Mammary epithelial cell (primary cell): ENCODE measurements at regions of chr4 and their contacts with region 1.

Region 1: DNA sequence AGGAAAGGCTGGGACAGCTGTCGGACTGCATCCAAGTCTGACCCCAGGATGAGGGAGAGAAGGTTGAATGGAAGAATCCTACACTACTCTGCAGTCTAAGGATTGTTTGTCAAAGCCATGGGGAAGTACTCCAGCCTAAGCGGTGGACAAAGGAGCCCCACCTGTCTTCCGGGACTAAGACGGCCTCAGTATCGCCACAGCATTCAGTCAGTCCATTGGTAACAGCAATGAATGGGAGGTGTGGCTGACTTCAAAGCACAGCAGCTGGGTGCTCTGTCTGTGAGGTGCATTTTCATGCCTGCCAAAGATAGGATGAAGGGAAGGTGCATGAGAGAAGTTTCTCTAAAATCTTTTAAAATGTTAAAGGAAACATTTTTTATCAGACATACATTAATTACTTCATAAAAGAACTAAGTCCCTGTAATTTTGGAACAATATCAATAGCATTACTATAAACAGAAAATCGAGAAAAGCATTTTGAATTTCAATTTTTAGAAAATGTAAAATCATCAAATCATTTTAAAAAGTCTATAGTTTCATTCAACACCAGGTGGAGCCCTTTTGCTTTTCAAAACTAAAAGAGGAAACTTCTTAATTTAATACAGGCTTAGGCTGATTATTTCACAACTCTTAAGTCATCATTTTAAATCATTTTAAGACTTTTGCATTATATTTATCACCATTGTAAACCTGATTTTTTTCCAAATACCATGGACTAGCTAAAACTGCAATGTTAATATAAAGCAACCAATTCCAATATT is 27.6 kb upstream of the INTU start:
- DNase-seq: peak; percentile 12
- H3K4me3 ChIP-seq: no peak overlapping the region
- H3K27ac ChIP-seq: no peak overlapping the region
- H3K4me1 ChIP-seq: no peaks in the 10 kb centered on the region
- H3K27me3 ChIP-seq: no peaks in the 10 kb centered on the region
- CTCF ChIP-seq: peak; percentile 28 to 46

Region 2: GRCh38 chr4:127698789-127699200 is 93.7 kb after region 1 on chr4:
- CTCF ChIA-PET with region 1: no interaction called
- dilution Hi-C with region 1: no loop called
- in situ Hi-C with region 1: no loop called
- intact Hi-C with region 1: no loop called
- DNase-seq: peak; percentile 87
- H3K4me3 ChIP-seq: no peak overlapping the region
- H3K27ac ChIP-seq: peak overlapping the region; percentile 16
- H3K4me1 ChIP-seq: no peaks in the 10 kb centered on the region
- H3K27me3 ChIP-seq: no peaks in the 10 kb centered on the region
- CTCF ChIP-seq: no peak

Region 3: GRCh38 chr4:127732613-127733328 is 127.6 kb after region 1 on chr4:
- CTCF ChIA-PET with region 1: no interaction called
- dilution Hi-C with region 1: no loop called
- in situ Hi-C with region 1: loop called (anchors 5 kb)
- intact Hi-C with region 1: loop called (anchors 1 kb)
- DNase-seq: peak; percentile 27
- H3K4me3 ChIP-seq: no peak overlapping the region
- H3K27ac ChIP-seq: no peak overlapping the region
- H3K4me1 ChIP-seq: no peaks in the 10 kb centered on the region
- H3K27me3 ChIP-seq: no peaks in the 10 kb centered on the region
- CTCF ChIP-seq: peak; percentile 45 to 59

Region 4: GRCh38 chr4:128538111-128538882 is 933.2 kb after region 1 on chr4:
- CTCF ChIA-PET with region 1: no interaction called
- dilution Hi-C with region 1: no loop called
- in situ Hi-C with region 1: no loop called
- intact Hi-C with region 1: no loop called
- DNase-seq: no peak
- H3K4me3 ChIP-seq: no peak overlapping the region
- H3K27ac ChIP-seq: no peak overlapping the region
- H3K4me1 ChIP-seq: no peaks in the 10 kb centered on the region
- H3K27me3 ChIP-seq: no peaks in the 10 kb centered on the region
- CTCF ChIP-seq: no peak